WTC11 (cell line): ENCODE measurements at regions of chr11 and their contacts with region 1.

Region 1: GRCh38 chr11:60775420-60775961 is 9.6 kb upstream of the MS4A10 start:
- DNase-seq: peak; percentile 93
- ATAC-seq: peak; percentile 99
- H3K4me3 Mint-ChIP-seq: no peak overlapping the region
- H3K27ac Mint-ChIP-seq: no peak overlapping the region
- H3K4me1 Mint-ChIP-seq: peaks cover 7% of the 10 kb centered on the region
- H3K27me3 Mint-ChIP-seq: peaks cover 5% of the 10 kb centered on the region; the same call in 1 of the 2 replicates
- CTCF ChIP-seq: peak; percentile 89

Region 2: GRCh38 chr11:60756307-60757032 is 19.0 kb before region 1 on chr11 and contains the start of gene MS4A15:
- CTCF ChIA-PET with region 1: interaction called, 125 read pairs
- POLR2A ChIA-PET with region 1: no interaction called
- DNase-seq: no peak
- ATAC-seq: peak; percentile 91
- H3K4me3 Mint-ChIP-seq: no peak within 1 kb of the TSS
- H3K27ac Mint-ChIP-seq: peak within 1 kb of the TSS; percentile 73; the same call in 1 of the 2 replicates
- H3K4me1 Mint-ChIP-seq: peaks cover 6% of the 10 kb centered on the region
- H3K27me3 Mint-ChIP-seq: no peaks in the 10 kb centered on the region
- CTCF ChIP-seq: peak; percentile 49; the same call in 1 of the 2 replicates
- total RNA-seq, gene MS4A15: 0.09 to 0.41 TPM (median 0.39 TPM) in 3 replicates

Region 3: GRCh38 chr11:60786811-60787567 is 11.5 kb after region 1 on chr11:
- CTCF ChIA-PET with region 1: interaction called, 17 read pairs
- POLR2A ChIA-PET with region 1: no interaction called
- DNase-seq: no peak
- ATAC-seq: no peak
- H3K4me3 Mint-ChIP-seq: no peak overlapping the region
- H3K27ac Mint-ChIP-seq: no peak overlapping the region
- H3K4me1 Mint-ChIP-seq: no peaks in the 10 kb centered on the region
- H3K27me3 Mint-ChIP-seq: peaks cover 7% of the 10 kb centered on the region
- CTCF ChIP-seq: no peak

Region 4: GRCh38 chr11:60899046-60899936 is 123.8 kb after region 1 on chr11:
- CTCF ChIA-PET with region 1: interaction called, 20 read pairs
- POLR2A ChIA-PET with region 1: no interaction called
- DNase-seq: peak; percentile 38
- ATAC-seq: peak; percentile 79
- H3K4me3 Mint-ChIP-seq: no peak overlapping the region
- H3K27ac Mint-ChIP-seq: no peak overlapping the region; the same call in 1 of the 2 replicates
- H3K4me1 Mint-ChIP-seq: peaks cover 4% of the 10 kb centered on the region
- H3K27me3 Mint-ChIP-seq: no peaks in the 10 kb centered on the region
- CTCF ChIP-seq: peak; percentile 80

Region 5: DNA sequence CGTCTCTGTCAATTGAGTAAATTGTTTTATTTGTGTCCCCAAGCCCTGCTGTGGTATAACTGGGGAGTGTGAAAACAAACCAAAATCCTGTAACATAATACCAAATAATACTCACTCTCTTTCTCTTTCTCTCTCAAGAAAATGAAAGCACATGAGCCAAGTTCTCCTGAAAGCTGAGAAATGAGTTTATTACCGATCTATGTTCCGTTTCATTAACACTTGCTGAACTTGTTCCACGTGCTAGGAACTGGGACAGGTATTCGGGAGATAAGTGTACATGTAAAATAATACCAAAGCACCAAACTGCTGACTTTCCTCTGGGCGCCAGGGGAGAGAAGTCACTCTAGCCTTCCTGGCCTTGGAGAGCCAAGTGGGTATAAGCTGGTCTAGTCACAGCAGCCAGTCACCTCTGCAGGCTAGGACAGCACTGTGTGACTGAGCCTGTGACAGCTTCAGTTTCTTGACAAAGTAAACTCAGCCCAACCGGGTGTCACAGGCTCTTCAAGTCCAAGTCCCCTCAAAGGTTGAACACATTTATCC is 219.1 kb after region 1 on chr11:
- CTCF ChIA-PET with region 1: no interaction called
- POLR2A ChIA-PET with region 1: no interaction called
- DNase-seq: no peak
- ATAC-seq: no peak
- H3K4me3 Mint-ChIP-seq: no peak overlapping the region
- H3K27ac Mint-ChIP-seq: no peak overlapping the region
- H3K4me1 Mint-ChIP-seq: no peaks in the 10 kb centered on the region
- H3K27me3 Mint-ChIP-seq: peaks cover 12% of the 10 kb centered on the region; the same call in 1 of the 2 replicates
- CTCF ChIP-seq: no peak